ENCODE measurements at regions of chr6 and their contacts with region 1.

Region 1: DNA sequence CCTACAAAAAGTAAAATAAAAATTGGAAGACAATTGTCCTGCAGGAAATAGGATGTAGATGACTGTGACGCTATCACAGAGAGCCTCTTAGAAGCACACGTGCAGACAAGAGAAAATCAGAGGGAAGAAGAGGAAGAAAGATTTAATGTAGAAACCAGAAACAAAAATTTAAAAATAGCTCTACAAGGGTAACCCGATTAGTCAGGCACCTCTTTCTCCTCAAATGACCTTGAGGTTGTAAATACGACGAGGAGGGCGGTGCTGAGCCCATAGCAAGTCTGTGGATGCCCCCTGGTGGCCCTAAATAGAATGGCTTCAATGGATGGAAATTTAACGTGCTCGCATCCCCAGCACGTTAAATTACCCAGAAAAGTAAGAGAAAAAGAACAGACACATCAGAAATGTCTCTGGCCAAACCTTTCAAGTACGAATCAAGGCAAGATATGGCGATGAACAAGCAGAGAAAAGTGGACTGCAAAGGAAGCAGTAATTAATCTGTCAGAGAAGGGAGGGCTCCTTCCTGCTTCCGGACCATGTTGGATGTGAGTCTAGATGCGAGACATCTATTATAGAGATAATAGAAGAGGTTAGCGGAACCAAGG is 4.2 kb upstream of the PRPH2 start:
- DNase-seq: peak; percentile 51 to 85 (median 75)
- H3K4me3 ChIP-seq: peak overlapping the region; percentile 68
- H3K4me3 Mint-ChIP-seq: peak overlapping the region; percentile 86 to 91 (median 89)
- H3K27ac ChIP-seq: peak overlapping the region; percentile 34
- H3K27ac Mint-ChIP-seq: peak overlapping the region; percentile 63 to 98 (median 94)
- H3K4me1 ChIP-seq: peaks cover 15% of the 10 kb centered on the region
- H3K4me1 Mint-ChIP-seq: peaks cover 19 to 23% (median 20%) of the 10 kb centered on the region in 3 donors
- H3K27me3 ChIP-seq: no peaks in the 10 kb centered on the region
- H3K27me3 Mint-ChIP-seq: peaks cover 0 to 3% of the 10 kb centered on the region in 2 donors

Region 2: DNA sequence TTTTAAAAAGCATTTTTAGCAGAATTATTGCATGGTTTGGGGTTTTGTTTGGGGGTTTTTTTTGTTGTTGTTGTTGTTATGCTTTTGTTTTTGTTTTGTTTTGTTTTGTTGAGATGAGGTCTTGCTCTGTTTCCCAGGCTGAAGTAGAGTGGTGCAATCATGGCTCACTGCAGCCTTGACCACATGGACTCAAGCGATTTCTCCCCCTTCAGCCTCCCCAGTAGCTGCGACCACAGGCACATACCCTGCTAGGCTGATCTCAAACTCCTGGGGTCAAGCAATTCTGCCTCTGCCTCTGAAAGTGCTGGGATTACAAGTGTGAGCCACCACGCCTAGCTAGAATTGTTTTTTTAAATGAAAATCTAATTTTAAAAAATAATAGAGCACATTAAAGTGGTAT is 127.0 kb before region 1 on chr6:
- CTCF ChIA-PET with region 1: no interaction called
- POLR2A ChIA-PET with region 1: no interaction called
- DNase-seq: no peak
- H3K4me3 ChIP-seq: no peak overlapping the region
- H3K4me3 Mint-ChIP-seq: no peak overlapping the region
- H3K27ac ChIP-seq: no peak overlapping the region
- H3K27ac Mint-ChIP-seq: peak overlapping the region in 2 of 8 donors; percentile 41 to 55
- H3K4me1 ChIP-seq: no peaks in the 10 kb centered on the region
- H3K4me1 Mint-ChIP-seq: peaks cover 19 to 40% (median 38%) of the 10 kb centered on the region in 3 donors
- H3K27me3 ChIP-seq: no peaks in the 10 kb centered on the region
- H3K27me3 Mint-ChIP-seq: no peaks in the 10 kb centered on the region

Region 3: DNA sequence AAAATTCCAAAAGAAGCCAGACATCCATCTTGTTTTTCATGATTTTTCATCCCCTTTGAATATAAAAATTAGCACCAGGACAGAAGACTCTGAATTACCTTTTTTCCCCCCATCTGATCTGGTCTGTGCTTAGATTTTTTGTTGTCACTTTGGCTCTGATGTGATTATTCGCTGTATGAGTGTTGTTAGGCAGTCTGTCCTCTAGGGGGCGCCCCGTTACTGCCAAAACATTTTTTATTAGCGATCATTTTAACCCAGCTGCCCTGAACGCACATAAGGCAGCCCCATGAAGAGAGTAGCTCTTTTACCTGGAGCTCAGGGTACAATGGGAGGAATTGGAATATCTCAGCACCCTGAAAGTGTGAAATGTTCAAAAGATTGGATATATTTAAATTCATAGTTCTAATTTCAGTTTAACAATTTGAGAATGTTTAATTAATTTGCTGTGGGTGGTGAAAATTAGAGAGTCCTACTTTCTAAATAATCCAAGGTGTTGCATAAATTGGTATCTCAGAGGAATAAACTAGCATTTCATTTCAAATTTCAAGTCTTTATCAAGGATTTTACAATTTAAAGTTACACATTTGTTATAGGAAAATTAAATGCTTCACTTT is 64.9 kb before region 1 on chr6:
- CTCF ChIA-PET with region 1: interaction called, 44 read pairs
- POLR2A ChIA-PET with region 1: interaction called, 4 read pairs
- DNase-seq: peak; percentile 75 to 88 (median 77)
- H3K4me3 ChIP-seq: no peak overlapping the region
- H3K4me3 Mint-ChIP-seq: no peak overlapping the region
- H3K27ac ChIP-seq: no peak overlapping the region
- H3K27ac Mint-ChIP-seq: peak overlapping the region in 5 of 8 donors; percentile 0 to 84 (median 17)
- H3K4me1 ChIP-seq: no peaks in the 10 kb centered on the region
- H3K4me1 Mint-ChIP-seq: peaks cover 0 to 5% (median 0%) of the 10 kb centered on the region in 3 donors
- H3K27me3 ChIP-seq: no peaks in the 10 kb centered on the region
- H3K27me3 Mint-ChIP-seq: no peaks in the 10 kb centered on the region

Region 4: GRCh38 chr6:42692137-42692911 is 34.3 kb before region 1 on chr6:
- CTCF ChIA-PET with region 1: interaction called, 20 read pairs
- POLR2A ChIA-PET with region 1: no interaction called
- DNase-seq: no peak
- H3K4me3 ChIP-seq: no peak overlapping the region
- H3K4me3 Mint-ChIP-seq: no peak overlapping the region
- H3K27ac ChIP-seq: no peak overlapping the region
- H3K27ac Mint-ChIP-seq: peak overlapping the region in 7 of 8 donors; percentile 29 to 76 (median 63)
- H3K4me1 ChIP-seq: peaks cover 17% of the 10 kb centered on the region
- H3K4me1 Mint-ChIP-seq: peaks cover 20 to 38% (median 29%) of the 10 kb centered on the region in 3 donors
- H3K27me3 ChIP-seq: no peaks in the 10 kb centered on the region
- H3K27me3 Mint-ChIP-seq: no peaks in the 10 kb centered on the region

Region 5: DNA sequence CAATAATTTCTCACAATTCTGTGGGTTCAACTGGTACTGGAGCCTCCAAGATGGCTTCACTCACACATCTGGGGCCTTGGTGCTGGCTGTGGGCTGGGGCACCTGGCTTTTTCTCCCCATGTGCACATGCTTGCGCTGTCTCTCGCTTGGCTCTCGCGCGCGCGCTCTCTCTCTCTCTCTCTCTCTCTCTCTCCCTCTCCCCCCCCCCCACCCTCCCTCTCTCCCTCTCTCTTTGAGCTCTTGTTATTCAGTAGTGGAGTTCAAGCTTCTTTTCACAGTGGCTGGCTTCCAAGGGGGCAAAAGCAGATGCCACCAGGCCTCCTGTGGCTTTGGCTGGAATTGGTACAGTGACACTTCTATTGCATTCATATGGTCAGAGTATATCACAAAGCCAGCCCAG is 30.1 kb after region 1 on chr6:
- CTCF ChIA-PET with region 1: no interaction called
- POLR2A ChIA-PET with region 1: no interaction called
- DNase-seq: no peak
- H3K4me3 ChIP-seq: no peak overlapping the region
- H3K4me3 Mint-ChIP-seq: no peak overlapping the region
- H3K27ac ChIP-seq: no peak overlapping the region
- H3K27ac Mint-ChIP-seq: peak overlapping the region in 1 of 8 donors; percentile 47
- H3K4me1 ChIP-seq: no peaks in the 10 kb centered on the region
- H3K4me1 Mint-ChIP-seq: peaks cover 25 to 45% (median 42%) of the 10 kb centered on the region in 3 donors
- H3K27me3 ChIP-seq: no peaks in the 10 kb centered on the region
- H3K27me3 Mint-ChIP-seq: no peaks in the 10 kb centered on the region

Region 6: DNA sequence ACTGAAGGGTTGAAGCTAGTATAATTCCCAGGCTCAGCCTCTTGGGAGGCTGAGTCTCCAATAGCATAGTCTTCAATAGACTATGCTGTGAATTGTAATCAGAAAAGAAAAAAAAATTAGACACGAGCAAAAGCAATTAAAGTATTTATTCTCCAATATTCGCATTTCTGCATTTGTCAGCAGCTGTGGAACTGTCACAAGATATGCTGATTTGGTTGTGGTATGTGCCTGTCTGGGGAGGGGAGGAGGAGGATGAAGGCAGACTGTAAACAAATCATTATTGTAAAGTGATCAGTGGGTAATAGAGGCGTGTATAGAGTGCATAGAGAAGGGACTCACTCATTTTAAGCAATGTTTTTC is 45.1 kb after region 1 on chr6:
- CTCF ChIA-PET with region 1: interaction called, 20 read pairs
- POLR2A ChIA-PET with region 1: interaction called, 12 read pairs
- DNase-seq: peak in 2 of 5 donors; percentile 20 to 72
- H3K4me3 ChIP-seq: peak overlapping the region; percentile 35
- H3K4me3 Mint-ChIP-seq: peak overlapping the region; percentile 74 to 88 (median 81)
- H3K27ac ChIP-seq: peak overlapping the region; percentile 67
- H3K27ac Mint-ChIP-seq: peak overlapping the region; percentile 96 to 100 (median 99)
- H3K4me1 ChIP-seq: peaks cover 66% of the 10 kb centered on the region
- H3K4me1 Mint-ChIP-seq: peaks cover 67 to 85% (median 82%) of the 10 kb centered on the region in 3 donors
- H3K27me3 ChIP-seq: no peaks in the 10 kb centered on the region
- H3K27me3 Mint-ChIP-seq: no peaks in the 10 kb centered on the region

Region 7: GRCh38 chr6:42782622-42783176 is 56.1 kb after region 1 on chr6:
- CTCF ChIA-PET with region 1: interaction called, 24 read pairs
- POLR2A ChIA-PET with region 1: interaction called, 26 read pairs
- DNase-seq: peak; percentile 65 to 89 (median 79)
- H3K4me3 ChIP-seq: peak overlapping the region; percentile 95
- H3K4me3 Mint-ChIP-seq: peak overlapping the region; percentile 93 to 100 (median 98)
- H3K27ac ChIP-seq: peak overlapping the region; percentile 99
- H3K27ac Mint-ChIP-seq: peak overlapping the region in 7 of 8 donors; percentile 98 to 100 (median 100)
- H3K4me1 ChIP-seq: peaks cover 64% of the 10 kb centered on the region
- H3K4me1 Mint-ChIP-seq: peaks cover 34 to 35% (median 34%) of the 10 kb centered on the region in 3 donors
- H3K27me3 ChIP-seq: no peaks in the 10 kb centered on the region
- H3K27me3 Mint-ChIP-seq: peaks cover 0 to 13% of the 10 kb centered on the region in 2 donors